ENCODE measurements at regions of chr6 and their contacts with region 1.

Region 1: GRCh38 chr6:157644043-157644810 is 178.8 kb upstream of the SNX9 start:
- DNase-seq: peak; percentile 66
- H3K4me3 ChIP-seq: no peak overlapping the region
- H3K27ac ChIP-seq: no peak overlapping the region
- H3K4me1 ChIP-seq: no peaks in the 10 kb centered on the region
- H3K27me3 ChIP-seq: no peaks in the 10 kb centered on the region

Region 2: GRCh38 chr6:157841211-157841840 is 197.1 kb after region 1 on chr6:
- in situ Hi-C with region 1: no loop called
- DNase-seq: peak; percentile 21
- H3K4me3 ChIP-seq: peak overlapping the region; percentile 52; the same call in 1 of the 2 replicates
- H3K27ac ChIP-seq: peak overlapping the region; percentile 65
- H3K4me1 ChIP-seq: peaks cover 80% of the 10 kb centered on the region
- H3K27me3 ChIP-seq: no peaks in the 10 kb centered on the region

Region 3: DNA sequence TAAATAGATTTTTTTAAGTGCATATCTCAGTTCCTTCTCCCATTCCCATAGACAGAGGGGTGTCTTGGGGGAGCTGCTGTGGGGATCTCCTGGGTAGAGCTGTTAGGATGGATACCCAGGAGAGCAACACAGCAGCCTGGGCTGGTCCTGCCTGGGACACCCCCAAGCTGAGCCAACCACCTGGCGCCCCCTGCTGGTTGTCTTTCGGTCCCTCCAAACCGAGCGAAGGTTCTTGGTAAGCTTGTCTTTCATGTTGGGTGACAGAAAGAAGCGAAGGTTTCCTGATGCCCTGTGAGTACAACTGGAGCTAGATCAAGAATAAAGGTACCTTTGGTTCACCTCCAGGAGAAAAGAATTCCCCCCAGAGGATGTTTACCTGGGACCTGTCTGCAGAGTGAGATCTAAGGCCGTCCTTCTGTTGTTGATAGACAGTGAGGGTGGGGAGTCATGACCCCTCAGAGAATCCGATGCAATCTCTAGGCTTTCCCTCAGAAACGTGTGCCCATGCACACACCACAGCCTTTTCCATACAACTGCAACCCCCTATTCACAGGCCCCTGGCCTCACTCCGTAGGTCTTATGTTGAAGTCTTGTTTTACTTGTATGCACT is 229.6 kb after region 1 on chr6:
- in situ Hi-C with region 1: loop called (anchors 10 kb)
- DNase-seq: peak; percentile 76
- H3K4me3 ChIP-seq: no peak overlapping the region
- H3K27ac ChIP-seq: no peak overlapping the region
- H3K4me1 ChIP-seq: peaks cover 13% of the 10 kb centered on the region
- H3K27me3 ChIP-seq: no peaks in the 10 kb centered on the region

Region 4: DNA sequence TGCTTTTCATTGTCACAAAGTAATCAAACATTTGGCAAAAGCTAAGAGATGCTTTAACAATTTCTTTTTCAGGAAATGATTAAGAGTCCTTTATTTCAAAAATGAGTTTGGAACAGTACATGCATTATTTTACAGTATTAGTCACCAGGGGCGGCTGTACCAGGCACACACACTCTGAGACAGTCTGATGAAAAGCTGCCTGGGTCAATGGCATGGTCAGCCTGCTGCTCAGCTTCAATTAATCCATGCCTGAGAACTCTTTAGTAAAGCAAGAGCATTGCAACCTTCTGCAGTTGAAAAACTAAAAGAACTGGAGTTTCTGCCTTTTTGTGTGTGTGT is 773.5 kb after region 1 on chr6:
- in situ Hi-C with region 1: no loop called
- DNase-seq: peak; percentile 84
- H3K4me3 ChIP-seq: 0 out of 2 replicates have a peak overlapping the region, but pooled peaks have one; percentile 37
- H3K27ac ChIP-seq: peak overlapping the region; percentile 61
- H3K4me1 ChIP-seq: peaks cover 31% of the 10 kb centered on the region
- H3K27me3 ChIP-seq: no peaks in the 10 kb centered on the region

Measured in GM23248 (cell line).